Activated T-helper 1 cell treated with anti-CD3 and anti-CD28 coated beads, Interleukin-12 subunit alpha, Interleukin-12 subunit beta, Interleukin-2, Interleukin-4 antibody, amounts not matched to agents 30 ng/mL and 10 ng/mL and 1 ng/mL, durations not matched to agents 14 hours and 24 hours and 36 hours (primary cell): ENCODE measurements at regions of chr19 and their contacts with region 1.

Region 1: DNA sequence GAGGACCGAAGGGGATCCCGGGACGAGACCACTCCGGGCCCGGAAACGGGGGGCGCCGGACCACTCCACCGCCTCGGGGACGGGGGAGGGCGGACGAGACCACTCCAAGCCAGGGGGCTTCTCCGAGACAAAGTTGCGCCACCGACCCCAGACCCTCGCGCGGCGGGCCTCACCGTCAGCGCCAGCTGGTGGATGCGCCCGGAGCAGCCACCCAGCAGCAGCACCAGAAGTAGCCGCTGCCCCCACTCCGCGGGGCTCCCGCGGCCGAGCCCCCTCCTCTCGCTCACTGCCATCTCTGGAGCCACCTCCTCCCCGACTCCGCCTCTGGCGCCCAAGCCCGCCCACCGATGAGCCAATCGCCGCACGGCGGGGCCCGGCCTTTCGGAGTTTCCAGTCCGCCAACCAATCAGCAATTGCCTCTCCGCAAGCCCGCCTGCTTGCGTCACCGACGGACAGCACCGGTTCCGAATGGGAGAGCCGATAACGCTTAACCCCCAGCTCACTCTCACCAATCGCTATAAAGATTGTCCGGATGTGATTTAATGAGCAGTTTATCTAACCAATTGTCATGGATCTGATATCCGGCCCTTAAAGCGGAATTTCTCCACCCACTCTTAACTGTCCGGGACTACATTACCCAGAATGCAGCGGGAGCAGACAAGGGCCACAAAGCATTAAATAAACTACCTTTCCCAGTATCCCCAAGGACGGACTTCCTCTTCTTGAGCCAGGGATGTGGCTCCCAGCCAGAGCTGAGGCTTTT is at the start of gene GPR108:
- DNase-seq: peak; percentile 100
- H3K4me3 Mint-ChIP-seq: peak within 1 kb of the TSS; percentile 96
- H3K27ac Mint-ChIP-seq: peak within 1 kb of the TSS; percentile 99
- H3K4me1 Mint-ChIP-seq: peaks cover 42% of the 10 kb centered on the region
- H3K27me3 Mint-ChIP-seq: no peaks in the 10 kb centered on the region
- total RNA-seq, gene GPR108: 106 and 108 TPM in 2 replicates

Region 2: DNA sequence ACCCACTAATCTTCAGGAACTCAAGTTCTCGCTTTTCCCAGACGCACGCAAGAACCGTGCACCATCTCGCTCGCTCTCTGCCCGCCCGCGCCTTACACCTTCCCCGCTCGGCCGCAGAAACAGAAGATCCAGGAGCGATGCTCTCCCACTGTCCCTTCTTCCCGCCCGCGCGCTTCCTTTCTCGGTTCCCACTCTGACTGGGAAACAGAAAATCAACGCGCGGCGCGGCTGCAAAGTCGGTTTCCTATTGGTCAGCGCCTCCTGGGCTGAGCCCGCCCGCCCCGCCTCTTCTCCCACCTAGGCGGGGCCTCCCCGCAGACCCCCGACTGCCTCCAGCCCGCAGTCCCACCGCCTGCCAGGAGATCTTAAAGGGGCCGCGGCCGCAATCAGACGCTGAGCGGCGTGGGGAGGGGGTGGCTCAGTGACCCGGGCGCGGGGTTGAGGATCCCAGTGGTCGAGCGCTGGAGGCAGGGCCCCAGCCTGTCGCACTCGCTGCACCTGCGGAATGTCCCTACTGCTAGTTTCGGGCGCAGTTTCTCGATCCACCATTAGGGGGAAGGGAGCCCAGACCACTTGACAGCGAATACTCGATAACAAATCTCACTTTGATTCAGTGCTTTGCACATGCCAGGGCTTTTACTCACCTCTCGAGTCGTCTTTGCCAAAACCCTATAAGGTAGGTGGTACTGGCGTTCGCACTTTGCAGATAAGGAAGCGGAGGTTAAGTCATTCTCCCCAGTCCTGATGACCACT is 277.2 kb before region 1 on chr19:
- intact Hi-C with region 1: loop called (anchors 1 kb)
- DNase-seq: peak; percentile 95
- H3K4me3 Mint-ChIP-seq: peak overlapping the region; percentile 89
- H3K27ac Mint-ChIP-seq: peak overlapping the region; percentile 84
- H3K4me1 Mint-ChIP-seq: peaks cover 21% of the 10 kb centered on the region
- H3K27me3 Mint-ChIP-seq: peaks cover 4% of the 10 kb centered on the region

Region 3: GRCh38 chr19:6590827-6591319 is 146.6 kb before region 1 on chr19 and contains the start of gene CD70:
- intact Hi-C with region 1: loop called (anchors 2 kb)
- DNase-seq: peak; percentile 70
- H3K4me3 Mint-ChIP-seq: peak within 1 kb of the TSS; percentile 95
- H3K27ac Mint-ChIP-seq: peak within 1 kb of the TSS; percentile 87
- H3K4me1 Mint-ChIP-seq: peaks cover 66% of the 10 kb centered on the region
- H3K27me3 Mint-ChIP-seq: peaks cover 33% of the 10 kb centered on the region
- total RNA-seq, gene CD70: 55.4 and 61.6 TPM in 2 replicates

Region 4: DNA sequence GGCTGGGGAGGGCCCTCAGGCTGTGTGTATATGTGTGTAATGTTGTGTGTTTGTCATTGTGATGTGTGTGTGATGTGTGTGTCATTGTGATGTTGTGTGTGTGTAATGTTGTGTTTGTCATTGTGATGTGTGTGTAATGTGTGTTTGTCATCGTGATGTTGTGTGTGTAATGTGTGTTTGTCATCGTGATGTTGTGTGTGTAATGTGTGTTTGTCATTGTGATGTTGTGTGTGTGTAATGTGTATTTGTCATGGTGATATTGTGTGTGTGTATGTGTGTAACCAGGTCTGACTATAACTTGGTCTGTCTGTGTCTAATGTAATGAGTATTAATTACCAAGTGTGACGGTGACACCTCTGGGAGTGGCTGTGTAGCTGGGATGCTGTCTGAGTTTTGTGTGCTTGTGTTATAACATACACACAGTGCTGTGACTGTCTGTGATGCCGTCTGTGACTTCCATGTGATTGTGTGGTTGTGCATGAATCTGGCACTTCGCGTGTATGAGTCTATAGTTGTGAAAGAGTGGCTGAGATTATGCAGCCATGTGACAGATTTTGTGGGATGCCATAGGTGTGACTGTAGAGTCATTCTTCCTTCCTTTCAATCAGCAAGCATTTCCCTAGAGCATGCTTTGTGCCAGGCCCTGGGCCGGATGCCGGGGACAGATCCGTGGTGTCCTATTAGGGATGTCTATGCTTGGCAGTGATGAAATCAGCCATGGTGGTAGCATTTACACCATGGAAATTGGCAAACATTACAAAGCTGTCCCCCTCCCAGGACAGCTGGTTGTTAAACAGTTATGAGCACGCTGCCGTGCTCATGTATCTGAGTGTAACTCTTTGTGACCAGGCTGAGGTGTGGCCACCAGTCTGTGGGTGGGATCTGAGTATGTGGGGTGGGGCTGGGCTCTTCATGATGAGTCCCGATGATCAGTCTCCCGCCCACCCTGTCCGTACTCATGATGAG is 73.9 kb before region 1 on chr19:
- intact Hi-C with region 1: loop called (anchors 1 kb)
- DNase-seq: no peak
- H3K4me3 Mint-ChIP-seq: no peak overlapping the region
- H3K27ac Mint-ChIP-seq: no peak overlapping the region
- H3K4me1 Mint-ChIP-seq: peaks cover 12% of the 10 kb centered on the region
- H3K27me3 Mint-ChIP-seq: no peaks in the 10 kb centered on the region

Region 5: GRCh38 chr19:6753178-6754031 is 15.9 kb after region 1 on chr19:
- intact Hi-C with region 1: loop called (anchors 1 kb)
- DNase-seq: peak; percentile 76
- H3K4me3 Mint-ChIP-seq: peak overlapping the region; percentile 75
- H3K27ac Mint-ChIP-seq: peak overlapping the region; percentile 88
- H3K4me1 Mint-ChIP-seq: peaks cover 19% of the 10 kb centered on the region
- H3K27me3 Mint-ChIP-seq: no peaks in the 10 kb centered on the region

Region 6: DNA sequence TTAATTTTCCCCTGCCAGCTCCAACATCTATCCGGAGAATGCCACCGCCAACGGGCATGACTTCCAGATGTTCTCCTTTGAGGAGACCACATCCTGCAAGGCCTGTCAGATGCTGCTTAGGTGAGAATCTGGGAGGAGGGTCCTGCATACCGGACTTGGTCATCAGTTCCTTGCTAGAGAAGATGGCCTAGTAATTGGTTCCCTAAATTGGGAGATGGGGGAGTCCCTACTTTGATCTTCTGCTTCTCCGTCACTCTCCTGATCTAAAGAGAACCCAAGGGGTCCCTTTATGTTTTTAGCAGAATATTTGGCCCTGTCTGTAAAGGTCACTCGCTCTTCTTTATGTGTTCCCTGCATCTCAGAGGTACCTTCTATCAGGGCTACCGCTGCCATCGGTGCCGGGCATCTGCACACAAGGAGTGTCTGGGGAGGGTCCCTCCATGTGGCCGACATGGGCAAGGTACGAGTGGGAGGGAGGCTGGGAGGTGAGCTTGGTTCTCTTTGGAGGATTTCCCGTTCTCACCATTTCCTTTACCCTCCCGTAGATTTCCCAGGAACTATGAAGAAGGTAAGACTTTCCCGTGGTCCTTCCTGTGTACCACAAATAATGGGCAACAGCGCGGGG is 95.8 kb after region 1 on chr19:
- intact Hi-C with region 1: no loop called
- DNase-seq: no peak
- H3K4me3 Mint-ChIP-seq: no peak overlapping the region
- H3K27ac Mint-ChIP-seq: no peak overlapping the region
- H3K4me1 Mint-ChIP-seq: peaks cover 30% of the 10 kb centered on the region
- H3K27me3 Mint-ChIP-seq: no peaks in the 10 kb centered on the region

Region 7: GRCh38 chr19:7376151-7376852 is 638.8 kb after region 1 on chr19:
- intact Hi-C with region 1: no loop called
- DNase-seq: no peak
- H3K4me3 Mint-ChIP-seq: no peak overlapping the region
- H3K27ac Mint-ChIP-seq: no peak overlapping the region
- H3K4me1 Mint-ChIP-seq: no peaks in the 10 kb centered on the region
- H3K27me3 Mint-ChIP-seq: no peaks in the 10 kb centered on the region